ENCODE measurements at regions of chr12 and their contacts with region 1.

Region 1: GRCh38 chr12:59431266-59431665 is 164.6 kb upstream of the SLC16A7 start:
- DNase-seq: peak; percentile 2
- ATAC-seq: no peak
- H3K4me3 ChIP-seq: no peak overlapping the region
- H3K27ac ChIP-seq: no peak overlapping the region
- H3K4me1 ChIP-seq: no peaks in the 10 kb centered on the region
- H3K27me3 ChIP-seq: no peaks in the 10 kb centered on the region
- CTCF ChIP-seq: peak; percentile 29; the same call in 1 of the 2 replicates
- POLR2A ChIP-seq: no peak
- RAD21 ChIP-seq: peak; percentile 30

Region 2: GRCh38 chr12:59093073-59093772 is 338.0 kb before region 1 on chr12:
- CTCF ChIA-PET with region 1: no interaction called
- POLR2A ChIA-PET with region 1: no interaction called
- dilution Hi-C with region 1: no loop called
- in situ Hi-C with region 1: no loop called
- intact Hi-C with region 1: no loop called
- DNase-seq: peak; percentile 80
- ATAC-seq: peak; percentile 86
- H3K4me3 ChIP-seq: no peak overlapping the region
- H3K27ac ChIP-seq: peak overlapping the region; percentile 41; the same call in 1 of the 2 replicates
- H3K4me1 ChIP-seq: peaks cover 6% of the 10 kb centered on the region
- H3K27me3 ChIP-seq: no peaks in the 10 kb centered on the region
- CTCF ChIP-seq: no peak
- POLR2A ChIP-seq: no peak
- RAD21 ChIP-seq: no peak

Region 3: DNA sequence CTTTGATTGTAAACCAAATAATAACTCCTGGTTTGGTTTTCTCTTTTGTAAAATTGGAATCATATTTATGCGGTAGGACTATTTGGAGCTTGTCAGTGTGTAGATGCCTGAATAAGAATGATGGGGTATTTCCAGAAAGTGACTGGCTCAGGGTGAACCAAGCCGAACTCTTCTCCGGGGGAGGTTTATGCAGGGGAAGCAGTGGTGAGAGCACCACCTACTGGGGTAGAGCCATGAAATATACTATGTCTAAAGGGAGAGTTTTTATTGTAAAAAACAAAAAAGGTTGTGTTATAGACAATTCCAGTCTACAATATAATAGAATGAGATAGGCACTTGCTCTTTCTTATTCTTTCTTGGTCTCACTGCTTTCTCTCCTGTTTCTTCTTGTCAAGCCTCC is 58.3 kb before region 1 on chr12:
- CTCF ChIA-PET with region 1: no interaction called
- POLR2A ChIA-PET with region 1: no interaction called
- dilution Hi-C with region 1: no loop called
- in situ Hi-C with region 1: no loop called
- intact Hi-C with region 1: loop called (anchors 10 kb)
- DNase-seq: peak; percentile 21
- ATAC-seq: peak; percentile 95
- H3K4me3 ChIP-seq: no peak overlapping the region
- H3K27ac ChIP-seq: no peak overlapping the region
- H3K4me1 ChIP-seq: no peaks in the 10 kb centered on the region
- H3K27me3 ChIP-seq: no peaks in the 10 kb centered on the region
- CTCF ChIP-seq: peak; percentile 46
- POLR2A ChIP-seq: no peak
- RAD21 ChIP-seq: peak; percentile 44

Measured in IMR-90 (cell line).